CD4-positive, alpha-beta T cell (primary cell): ENCODE measurements at regions of chr12 and their contacts with region 1.

Region 1: DNA sequence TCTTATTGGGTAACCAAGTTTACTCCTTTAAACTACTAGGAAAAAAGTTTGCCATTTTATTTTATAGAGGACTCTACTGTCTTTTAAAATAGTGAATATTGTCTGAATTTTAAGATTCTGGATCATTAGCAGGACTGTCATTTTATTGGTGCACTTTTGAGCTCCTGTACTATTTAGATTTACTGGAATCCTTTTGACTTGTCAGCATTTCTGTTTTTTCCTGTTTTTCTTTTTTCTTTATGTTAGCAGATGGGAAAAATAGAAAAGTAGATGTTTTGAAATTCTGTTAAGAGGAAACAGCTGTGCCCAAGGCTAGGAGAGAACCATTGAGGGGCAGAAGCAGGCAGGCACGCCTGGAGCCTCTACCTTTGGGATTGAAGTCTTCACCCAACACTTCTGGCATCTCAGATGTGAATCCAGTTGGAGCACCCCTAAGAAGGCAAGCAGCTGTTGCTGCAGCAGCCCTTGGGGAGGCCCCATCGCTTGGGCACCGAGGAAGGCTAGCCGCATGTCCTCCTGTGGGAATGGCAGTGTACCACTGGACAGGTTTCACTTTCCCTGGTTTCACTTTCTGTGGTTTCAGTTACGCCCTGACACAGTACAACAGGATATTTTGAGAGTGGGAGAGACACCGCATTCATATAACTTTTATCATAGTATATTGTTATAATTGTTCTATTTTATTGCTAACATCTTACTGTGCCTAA is 11.5 kb downstream of the RIMKLB start:
- DNase-seq: peak in 2 of 14 experiments; percentile 19 to 21
- ATAC-seq: no peak
- H3K4me3 ChIP-seq: no peak overlapping the region
- H3K4me3 Mint-ChIP-seq: no peak overlapping the region
- H3K27ac ChIP-seq: no peak overlapping the region
- H3K27ac Mint-ChIP-seq: no peak overlapping the region
- H3K4me1 ChIP-seq: peaks cover 5% of the 10 kb centered on the region
- H3K4me1 Mint-ChIP-seq: peaks cover 15% of the 10 kb centered on the region
- H3K27me3 ChIP-seq: no peaks in the 10 kb centered on the region
- H3K27me3 Mint-ChIP-seq: no peaks in the 10 kb centered on the region
- CTCF ChIP-seq: no peak

Region 2: DNA sequence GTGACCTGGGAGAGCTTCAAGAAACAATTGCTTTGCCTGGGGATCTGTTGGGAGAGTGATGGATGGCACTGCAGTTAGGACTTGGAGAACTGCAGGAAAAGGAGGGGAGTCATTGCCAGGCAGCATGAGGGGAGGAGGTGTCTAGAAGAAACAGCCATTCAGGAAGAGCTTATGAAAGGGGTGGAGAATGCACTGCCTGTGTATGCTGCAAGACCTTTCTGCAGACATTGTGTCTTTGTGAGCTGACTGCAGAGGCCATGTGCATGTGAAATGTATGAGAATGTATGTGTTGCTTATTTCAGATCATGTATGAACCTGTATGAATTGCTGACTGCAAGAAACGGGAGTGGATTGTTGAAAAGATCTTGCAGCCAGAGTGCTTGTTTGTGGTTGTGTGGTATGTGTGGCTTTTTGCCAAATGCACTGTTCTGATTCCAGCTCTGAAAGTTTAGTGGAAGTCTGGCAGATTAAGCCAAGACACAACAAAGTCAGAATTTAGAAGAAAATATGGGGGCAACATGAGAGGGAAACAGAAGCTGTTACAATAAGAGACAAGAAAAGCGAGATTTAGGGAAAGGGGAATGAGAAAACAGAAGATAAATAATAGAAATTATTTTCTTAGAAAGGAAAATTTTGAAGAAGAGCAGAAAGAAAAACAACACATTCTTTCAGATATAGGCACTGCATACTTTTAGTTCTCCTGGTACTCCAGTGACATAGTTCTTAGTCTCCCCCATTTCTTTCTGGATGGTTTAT is 21.3 kb before region 1 on chr12:
- CTCF ChIA-PET with region 1: no interaction called
- POLR2A ChIA-PET with region 1: no interaction called
- intact Hi-C with region 1: loop called in 1 of 2 experiments (anchors 1 kb)
- DNase-seq: peak in 2 of 14 experiments; percentile 7 to 19
- ATAC-seq: peak; percentile 41
- H3K4me3 ChIP-seq: no peak overlapping the region
- H3K4me3 Mint-ChIP-seq: no peak overlapping the region
- H3K27ac ChIP-seq: no peak overlapping the region
- H3K27ac Mint-ChIP-seq: no peak overlapping the region
- H3K4me1 ChIP-seq: peaks cover 5% of the 10 kb centered on the region
- H3K4me1 Mint-ChIP-seq: peaks cover 14% of the 10 kb centered on the region
- H3K27me3 ChIP-seq: no peaks in the 10 kb centered on the region
- H3K27me3 Mint-ChIP-seq: no peaks in the 10 kb centered on the region
- CTCF ChIP-seq: no peak

Region 3: GRCh38 chr12:8742501-8742900 is 33.2 kb after region 1 on chr12:
- CTCF ChIA-PET with region 1: no interaction called
- POLR2A ChIA-PET with region 1: no interaction called
- intact Hi-C with region 1: no loop called
- DNase-seq: no peak
- ATAC-seq: no peak
- H3K4me3 ChIP-seq: no peak overlapping the region
- H3K4me3 Mint-ChIP-seq: no peak overlapping the region
- H3K27ac ChIP-seq: no peak overlapping the region
- H3K27ac Mint-ChIP-seq: no peak overlapping the region
- H3K4me1 ChIP-seq: no peaks in the 10 kb centered on the region
- H3K4me1 Mint-ChIP-seq: no peaks in the 10 kb centered on the region
- H3K27me3 ChIP-seq: no peaks in the 10 kb centered on the region
- H3K27me3 Mint-ChIP-seq: no peaks in the 10 kb centered on the region
- CTCF ChIP-seq: no peak